GM23248 (cell line): ENCODE measurements at regions of chr15 and their contacts with region 1.

Region 1: GRCh38 chr15:81400640-81401236 is 26.7 kb upstream of the TMC3 start:
- DNase-seq: peak; percentile 62
- H3K4me3 ChIP-seq: no peak overlapping the region
- H3K27ac ChIP-seq: no peak overlapping the region
- H3K4me1 ChIP-seq: peaks cover 7% of the 10 kb centered on the region; the same call in 1 of the 2 replicates
- H3K27me3 ChIP-seq: no peaks in the 10 kb centered on the region

Region 2: GRCh38 chr15:81274931-81275707 is 125.6 kb before region 1 on chr15:
- in situ Hi-C with region 1: loop called (anchors 5 kb)
- DNase-seq: peak; percentile 81
- H3K4me3 ChIP-seq: no peak overlapping the region
- H3K27ac ChIP-seq: no peak overlapping the region
- H3K4me1 ChIP-seq: peaks cover 19% of the 10 kb centered on the region
- H3K27me3 ChIP-seq: no peaks in the 10 kb centered on the region